MCF 10A (cell line): ENCODE measurements at regions of chr11 and their contacts with region 1.

Region 1: DNA sequence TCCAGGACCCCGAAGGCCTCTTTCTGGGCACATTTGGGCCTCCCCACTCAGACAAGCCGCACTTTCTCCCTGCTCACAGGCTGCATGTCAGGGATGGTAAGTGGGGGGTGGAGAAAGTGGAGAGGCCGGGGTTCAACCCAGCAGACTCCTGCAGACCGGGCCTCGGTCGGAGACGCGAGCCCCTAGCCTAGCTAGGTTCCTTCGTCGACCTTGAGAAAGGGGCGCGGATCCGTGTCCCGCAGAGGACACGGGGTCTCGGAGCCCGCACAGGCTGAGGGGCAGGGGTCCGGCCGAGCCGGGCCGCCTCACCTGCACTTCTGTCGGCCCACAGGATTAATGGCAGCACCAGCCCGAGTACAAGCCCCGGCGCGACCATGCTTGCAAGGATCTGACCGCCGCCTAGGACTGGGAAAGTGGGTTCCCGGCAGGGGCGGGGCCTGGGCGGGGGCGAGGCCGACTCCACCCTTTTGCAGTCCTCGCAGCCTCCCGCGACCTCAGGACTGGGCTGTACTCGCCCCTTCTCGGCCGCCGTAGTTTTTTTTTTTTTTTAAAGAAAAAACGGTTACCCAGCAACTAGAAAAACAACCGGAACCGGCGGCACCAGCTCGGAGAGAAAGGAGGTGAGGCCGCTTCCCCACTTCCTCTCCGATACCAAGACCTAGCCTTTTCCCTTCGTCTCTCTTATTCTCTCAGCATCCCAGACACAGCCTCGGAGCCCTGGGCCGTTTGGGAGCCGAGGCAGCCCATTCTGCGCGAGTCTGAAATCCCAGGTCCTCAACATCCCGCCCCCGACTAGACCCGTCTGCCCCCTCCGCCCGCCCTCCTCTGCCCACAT is at the starts of genes SIAE and SPA17:
- DNase-seq: peak; percentile 95
- H3K4me3 Mint-ChIP-seq: peak within 1 kb of the TSS; percentile 88
- H3K27ac Mint-ChIP-seq: peak within 1 kb of the TSS; percentile 98
- H3K4me1 Mint-ChIP-seq: peaks cover 12% of the 10 kb centered on the region
- H3K27me3 Mint-ChIP-seq: no peaks in the 10 kb centered on the region
- CTCF ChIP-seq: no peak
- total RNA-seq, gene SIAE: 20.7 and 21.7 TPM in 2 replicates
- total RNA-seq, gene SPA17: 12.0 and 18.1 TPM in 2 replicates

Region 2: GRCh38 chr11:124656774-124657630 is 16.5 kb before region 1 on chr11:
- CTCF ChIA-PET with region 1: interaction called, 10 read pairs
- POLR2A ChIA-PET with region 1: interaction called, 3 read pairs
- intact Hi-C with region 1: no loop called
- DNase-seq: no peak
- H3K4me3 Mint-ChIP-seq: no peak overlapping the region
- H3K27ac Mint-ChIP-seq: no peak overlapping the region
- H3K4me1 Mint-ChIP-seq: no peaks in the 10 kb centered on the region
- H3K27me3 Mint-ChIP-seq: no peaks in the 10 kb centered on the region
- CTCF ChIP-seq: no peak

Region 3: DNA sequence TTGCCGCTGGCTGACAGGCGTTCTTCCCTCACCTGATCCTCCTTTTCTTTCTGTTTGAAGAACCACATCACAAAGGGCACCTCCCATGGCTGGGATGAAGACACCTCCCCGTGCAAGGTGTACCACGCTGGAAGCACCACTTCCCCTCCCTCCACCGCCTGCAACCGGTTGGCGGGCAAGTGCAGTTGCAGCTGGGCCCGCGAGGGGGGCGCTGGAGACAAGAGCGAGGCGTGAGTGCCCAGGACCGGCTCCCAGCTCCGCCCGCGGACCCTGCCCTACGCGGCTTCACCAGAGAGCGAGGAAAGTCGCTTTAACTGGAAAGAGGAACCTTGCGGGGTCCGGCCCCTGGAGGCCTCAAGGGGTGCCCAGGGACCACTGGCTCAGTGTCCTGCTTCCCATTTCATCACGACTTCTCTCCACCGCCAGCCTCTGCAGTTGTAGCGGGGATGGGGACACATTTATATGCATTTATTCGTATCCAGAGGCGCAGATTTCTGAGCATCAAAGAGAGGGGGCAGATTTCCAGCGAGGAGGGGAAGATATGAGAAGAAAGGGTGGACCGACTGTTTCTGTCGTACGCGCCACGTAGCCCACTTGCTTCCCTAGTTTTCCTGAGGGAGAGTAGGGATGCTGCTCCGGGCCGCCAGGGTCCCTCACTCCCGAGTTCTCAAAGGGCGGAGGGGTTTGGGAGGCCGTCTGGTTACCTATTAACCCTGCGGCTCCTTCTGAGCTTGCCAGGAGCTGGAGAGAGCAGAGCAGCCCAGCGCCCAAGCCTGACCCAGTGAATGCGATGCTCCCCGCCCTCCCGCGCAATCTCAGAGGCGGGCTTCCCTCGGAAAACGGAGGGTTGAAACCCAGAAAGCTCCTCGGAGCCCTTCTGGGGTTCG is 85.0 kb after region 1 on chr11:
- CTCF ChIA-PET with region 1: interaction called, 112 read pairs
- POLR2A ChIA-PET with region 1: interaction called, 5 read pairs
- intact Hi-C with region 1: loop called (anchors 1 kb)
- DNase-seq: peak; percentile 41
- H3K4me3 Mint-ChIP-seq: peak overlapping the region; percentile 33
- H3K27ac Mint-ChIP-seq: no peak overlapping the region
- H3K4me1 Mint-ChIP-seq: peaks cover 5% of the 10 kb centered on the region
- H3K27me3 Mint-ChIP-seq: no peaks in the 10 kb centered on the region
- CTCF ChIP-seq: peak; percentile 34

Region 4: GRCh38 chr11:124793466-124794278 is 120.1 kb after region 1 on chr11:
- CTCF ChIA-PET with region 1: interaction called, 36 read pairs
- POLR2A ChIA-PET with region 1: interaction called, 13 read pairs
- intact Hi-C with region 1: loop called (anchors 1 kb)
- DNase-seq: peak; percentile 73
- H3K4me3 Mint-ChIP-seq: no peak overlapping the region
- H3K27ac Mint-ChIP-seq: no peak overlapping the region
- H3K4me1 Mint-ChIP-seq: peaks cover 25% of the 10 kb centered on the region
- H3K27me3 Mint-ChIP-seq: no peaks in the 10 kb centered on the region
- CTCF ChIP-seq: peak; percentile 60

Region 5: DNA sequence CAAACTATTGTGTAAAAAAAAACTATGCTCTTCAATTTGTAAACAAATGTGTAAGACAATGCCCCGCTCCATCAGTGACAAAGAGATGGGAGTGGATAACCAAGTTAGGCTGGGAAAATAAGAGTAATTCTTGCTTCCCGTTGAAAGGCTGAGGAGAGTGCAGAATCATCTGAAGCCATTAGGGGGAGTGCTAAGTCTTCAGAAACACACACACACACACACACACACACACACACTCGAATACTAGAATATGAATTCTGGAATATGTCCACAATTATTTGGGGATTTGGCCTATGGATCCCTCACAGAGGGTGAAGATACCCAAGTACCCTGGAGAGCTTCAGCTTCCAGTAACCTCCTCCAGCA is 163.9 kb after region 1 on chr11:
- CTCF ChIA-PET with region 1: interaction called, 45 read pairs
- POLR2A ChIA-PET with region 1: interaction called, 8 read pairs
- intact Hi-C with region 1: loop called (anchors 1 kb)
- DNase-seq: peak; percentile 80
- H3K4me3 Mint-ChIP-seq: no peak overlapping the region
- H3K27ac Mint-ChIP-seq: no peak overlapping the region
- H3K4me1 Mint-ChIP-seq: peaks cover 4% of the 10 kb centered on the region
- H3K27me3 Mint-ChIP-seq: peaks cover 27% of the 10 kb centered on the region
- CTCF ChIP-seq: peak; percentile 26

Region 6: DNA sequence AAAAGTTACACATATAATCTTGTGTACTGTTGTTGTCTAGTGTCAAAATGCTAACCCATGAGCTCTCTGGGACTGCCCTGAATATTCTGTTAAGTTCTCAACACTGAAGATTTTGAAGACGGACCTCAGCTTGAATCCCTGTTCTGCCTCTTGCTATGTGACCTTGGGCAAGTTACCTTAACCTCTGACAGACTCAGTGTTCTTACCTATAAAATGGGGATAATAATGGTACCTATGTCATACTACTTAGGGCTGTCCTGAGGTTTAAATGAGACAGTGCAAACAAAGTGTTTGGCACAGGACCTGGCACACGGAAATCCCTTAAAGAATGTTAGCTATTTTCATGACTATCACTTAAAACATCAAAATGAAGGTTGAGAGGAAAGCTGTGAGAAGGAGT is 426.6 kb after region 1 on chr11:
- CTCF ChIA-PET with region 1: no interaction called
- POLR2A ChIA-PET with region 1: no interaction called
- intact Hi-C with region 1: no loop called
- DNase-seq: no peak
- H3K4me3 Mint-ChIP-seq: no peak overlapping the region
- H3K27ac Mint-ChIP-seq: no peak overlapping the region
- H3K4me1 Mint-ChIP-seq: no peaks in the 10 kb centered on the region
- H3K27me3 Mint-ChIP-seq: no peaks in the 10 kb centered on the region
- CTCF ChIP-seq: no peak